ENCODE measurements at regions of chr6 and their contacts with region 1.

Region 1: GRCh38 chr6:35363293-35363750 is 21.0 kb downstream of the PPARD start:
- DNase-seq: peak; percentile 86 to 96 (median 91)
- ATAC-seq: peak; percentile 94
- H3K4me3 ChIP-seq: peak overlapping the region; percentile 19
- H3K27ac ChIP-seq: peak overlapping the region; percentile 87
- H3K4me1 ChIP-seq: peaks cover 20 to 47% of the 10 kb centered on the region in 2 experiments
- H3K27me3 ChIP-seq: no peaks in the 10 kb centered on the region
- CTCF ChIP-seq: no peak
- EP300 ChIP-seq: peak; percentile 77; the same call in 1 of the 2 replicates
- POLR2A ChIP-seq: peak; percentile 88
- RAD21 ChIP-seq: no peak

Region 2: GRCh38 chr6:35377002-35377401 is 13.7 kb after region 1 on chr6:
- CTCF ChIA-PET with region 1: no interaction called
- POLR2A ChIA-PET with region 1: interaction called, 11 read pairs
- in situ Hi-C with region 1: no loop called
- intact Hi-C with region 1: no loop called
- DNase-seq: no peak
- ATAC-seq: no peak
- H3K4me3 ChIP-seq: no peak overlapping the region
- H3K27ac ChIP-seq: no peak overlapping the region
- H3K4me1 ChIP-seq: no peaks in the 10 kb centered on the region; a peak in 1 of 5 replicates
- H3K27me3 ChIP-seq: no peaks in the 10 kb centered on the region; a peak in 1 of 5 replicates
- CTCF ChIP-seq: no peak
- EP300 ChIP-seq: no peak
- POLR2A ChIP-seq: no peak
- RAD21 ChIP-seq: no peak